H1 (cell line): ENCODE measurements at regions of chr1 and their contacts with region 1.

Region 1: DNA sequence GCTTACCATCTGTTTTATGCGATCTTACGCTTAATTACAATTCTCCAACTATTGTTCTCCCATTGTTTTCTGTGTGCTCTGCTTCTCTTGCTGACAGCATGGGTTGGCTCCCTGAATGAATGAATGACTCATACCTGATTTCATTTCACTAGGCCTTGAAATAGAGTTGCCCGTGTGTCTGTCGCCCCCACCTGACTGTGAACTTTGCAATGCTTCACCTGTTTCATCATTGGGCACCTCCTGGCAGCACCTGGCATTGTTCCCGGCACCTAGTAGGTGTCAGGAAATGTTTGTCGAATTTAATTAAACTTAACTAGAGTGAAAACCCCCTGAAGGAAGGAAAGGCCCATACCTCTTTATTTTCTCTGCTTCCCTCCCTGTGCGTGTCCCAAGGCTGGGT is 120.5 kb upstream of the KLHDC7A start:
- DNase-seq: no peak
- H3K4me3 ChIP-seq: no peak overlapping the region
- H3K27ac ChIP-seq: no peak overlapping the region
- H3K4me1 ChIP-seq: no peaks in the 10 kb centered on the region; a peak in 2 of 7 replicates
- H3K27me3 ChIP-seq: no peaks in the 10 kb centered on the region
- CTCF ChIP-seq: peak in 2 of 3 experiments; percentile 13 to 17; a peak in 1 of 4 replicates
- EP300 ChIP-seq: no peak
- POLR2A ChIP-seq: no peak
- RAD21 ChIP-seq: peak; percentile 24; a peak in 2 of 4 replicates

Region 2: DNA sequence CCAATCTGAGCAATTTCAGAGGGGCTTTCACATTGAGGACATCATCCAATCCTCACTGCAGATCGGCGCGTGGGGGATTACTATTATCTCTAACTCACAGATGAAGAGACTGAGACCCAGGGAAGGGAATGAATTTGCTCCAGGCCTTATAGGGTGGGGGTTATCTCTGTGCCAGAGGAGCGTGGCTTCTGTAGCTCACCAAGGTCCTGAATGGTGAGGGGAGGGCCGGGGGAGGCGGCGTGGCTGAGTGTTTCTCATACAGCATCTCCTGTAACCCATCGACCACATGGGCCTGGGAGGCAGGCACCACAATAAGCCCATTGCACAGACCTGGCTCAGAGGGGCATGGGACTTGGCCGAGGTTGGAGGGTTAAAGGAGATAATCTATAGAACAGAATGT is 22.5 kb before region 1 on chr1:
- CTCF ChIA-PET with region 1: no interaction called
- POLR2A ChIA-PET with region 1: no interaction called
- DNase-seq: no peak
- H3K4me3 ChIP-seq: no peak overlapping the region
- H3K27ac ChIP-seq: no peak overlapping the region
- H3K4me1 ChIP-seq: peaks cover 0 to 3% (median 2%) of the 10 kb centered on the region in 4 experiments; a peak in 3 of 7 replicates
- H3K27me3 ChIP-seq: peaks cover 0 to 2% (median 0%) of the 10 kb centered on the region in 4 experiments; a peak in 2 of 7 replicates
- CTCF ChIP-seq: no peak
- EP300 ChIP-seq: no peak
- POLR2A ChIP-seq: no peak
- RAD21 ChIP-seq: no peak

Region 3: GRCh38 chr1:18373882-18374493 is 13.7 kb after region 1 on chr1:
- CTCF ChIA-PET with region 1: interaction called, 17 read pairs
- POLR2A ChIA-PET with region 1: no interaction called
- DNase-seq: peak; percentile 44 to 96
- H3K4me3 ChIP-seq: no peak overlapping the region
- H3K27ac ChIP-seq: no peak overlapping the region
- H3K4me1 ChIP-seq: peaks cover 0 to 6% (median 0%) of the 10 kb centered on the region in 4 experiments; a peak in 2 of 7 replicates
- H3K27me3 ChIP-seq: peaks cover 0 to 3% (median 0%) of the 10 kb centered on the region in 4 experiments; a peak in 2 of 7 replicates
- CTCF ChIP-seq: peak; percentile 95 to 96 (median 96)
- EP300 ChIP-seq: no peak
- POLR2A ChIP-seq: no peak
- RAD21 ChIP-seq: peak; percentile 68 to 83

Region 4: DNA sequence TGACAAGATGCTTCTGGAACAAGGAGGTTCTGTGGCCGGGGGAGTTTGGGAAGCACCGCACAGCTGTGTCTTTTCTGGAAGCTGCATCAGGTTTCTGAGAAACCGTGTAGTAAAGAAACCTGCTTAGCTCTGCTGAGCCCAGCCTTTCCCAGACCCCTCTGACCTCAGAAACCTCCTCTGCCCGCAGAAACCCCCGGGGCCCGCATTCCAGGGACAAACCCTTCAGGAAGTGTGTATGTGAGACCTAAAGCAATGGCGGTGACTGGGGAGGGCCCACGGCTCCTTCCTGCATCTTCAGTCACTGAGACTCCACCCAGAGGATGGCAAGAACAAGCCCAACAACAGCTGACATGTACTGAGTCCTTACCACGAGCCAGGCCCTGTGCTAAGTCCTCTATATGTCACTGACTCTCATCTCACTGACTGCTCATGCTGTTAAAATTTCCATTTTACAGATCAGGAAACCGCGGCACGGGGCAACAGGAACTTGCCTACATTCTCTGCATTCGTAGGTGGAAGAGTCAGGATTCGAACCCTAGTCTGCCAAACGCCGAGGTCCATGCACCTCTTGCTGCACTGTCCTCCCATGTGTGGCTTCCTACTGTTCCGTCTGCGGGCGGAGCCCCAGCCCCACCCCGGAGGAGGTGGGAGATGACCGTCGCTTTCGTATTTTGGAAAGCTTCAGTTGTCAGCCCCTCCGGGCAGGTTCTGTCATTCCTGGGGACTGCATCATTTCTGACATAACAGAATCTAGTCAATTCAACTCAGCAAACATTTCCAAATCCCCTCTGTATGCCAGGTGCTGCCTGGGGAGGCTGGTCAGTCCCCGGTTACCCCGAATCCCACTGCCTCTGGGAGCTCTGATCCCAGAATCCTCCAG is 47.2 kb after region 1 on chr1:
- CTCF ChIA-PET with region 1: no interaction called
- POLR2A ChIA-PET with region 1: no interaction called
- DNase-seq: no peak
- H3K4me3 ChIP-seq: no peak overlapping the region
- H3K27ac ChIP-seq: no peak overlapping the region
- H3K4me1 ChIP-seq: peaks cover 12 to 49% (median 17%) of the 10 kb centered on the region in 4 experiments
- H3K27me3 ChIP-seq: no peaks in the 10 kb centered on the region; a peak in 1 of 7 replicates
- CTCF ChIP-seq: no peak
- EP300 ChIP-seq: no peak
- POLR2A ChIP-seq: no peak
- RAD21 ChIP-seq: no peak

Region 5: DNA sequence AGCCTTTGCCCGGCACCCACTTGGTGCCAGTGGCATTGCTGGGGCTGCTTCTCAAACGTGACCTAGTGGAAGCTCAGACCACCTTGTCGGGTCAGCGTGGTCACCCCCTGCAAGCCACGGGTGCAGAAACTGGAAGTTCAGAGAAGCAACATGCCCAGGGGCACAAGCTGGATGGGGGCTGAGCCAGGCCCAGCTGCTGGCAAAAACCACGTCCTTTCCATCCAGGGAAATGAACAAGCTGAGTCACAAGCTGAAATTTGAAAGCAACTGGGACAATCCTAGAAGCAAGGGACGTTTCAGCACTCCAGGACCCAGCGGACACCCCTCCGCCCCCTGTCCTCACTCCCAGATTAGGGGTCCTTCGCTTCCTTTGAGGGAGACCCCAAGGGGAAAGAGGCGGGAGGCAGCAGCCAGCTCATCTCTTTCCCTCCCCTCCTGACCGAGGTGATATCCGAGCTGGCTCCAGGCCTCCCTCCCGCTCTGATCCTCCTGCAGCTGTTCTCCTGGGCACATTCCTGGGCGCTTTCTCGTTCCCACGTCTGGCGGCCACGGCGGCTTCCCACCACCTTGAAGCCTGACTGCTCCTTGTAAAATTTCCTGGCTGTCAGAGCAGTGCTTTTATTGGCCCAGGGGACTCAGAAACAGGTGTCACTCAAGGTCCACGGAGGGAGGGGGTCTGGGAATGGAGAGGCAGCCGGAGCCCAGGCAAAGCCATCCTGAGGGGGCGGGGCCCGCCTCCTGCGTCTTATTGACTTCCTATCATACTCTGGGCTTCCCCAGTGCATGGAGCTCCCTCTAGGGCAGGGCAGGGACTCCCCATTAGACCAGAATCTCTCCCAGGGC is 333.2 kb after region 1 on chr1:
- CTCF ChIA-PET with region 1: no interaction called
- POLR2A ChIA-PET with region 1: no interaction called
- DNase-seq: peak; percentile 49 to 89
- H3K4me3 ChIP-seq: peak overlapping the region; percentile 17 to 55 (median 26); a peak in 5 of 8 replicates
- H3K27ac ChIP-seq: no peak overlapping the region
- H3K4me1 ChIP-seq: peaks cover 0 to 10% (median 5%) of the 10 kb centered on the region in 4 experiments; a peak in 4 of 7 replicates
- H3K27me3 ChIP-seq: peaks cover 0 to 16% (median 5%) of the 10 kb centered on the region in 4 experiments; a peak in 5 of 7 replicates
- CTCF ChIP-seq: peak; percentile 21 to 28 (median 23)
- EP300 ChIP-seq: no peak
- POLR2A ChIP-seq: no peak
- RAD21 ChIP-seq: peak; percentile 20 to 53